SK-N-SH (cell line): ENCODE measurements at regions of chr5 and their contacts with region 1.

Region 1: GRCh38 chr5:115309751-115310370 is 13.4 kb upstream of the CCDC112 start:
- DNase-seq: no peak
- H3K4me3 ChIP-seq: no peak overlapping the region
- H3K27ac ChIP-seq: no peak overlapping the region
- H3K4me1 ChIP-seq: no peaks in the 10 kb centered on the region
- H3K27me3 ChIP-seq: no peaks in the 10 kb centered on the region
- CTCF ChIP-seq: peak; percentile 79
- EP300 ChIP-seq: no peak
- RAD21 ChIP-seq: peak; percentile 78

Region 2: GRCh38 chr5:115246361-115246991 is 63.4 kb before region 1 on chr5:
- CTCF ChIA-PET with region 1: no interaction called
- POLR2A ChIA-PET with region 1: no interaction called
- DNase-seq: peak; percentile 42
- H3K4me3 ChIP-seq: peak overlapping the region in 1 of 2 experiments; percentile 23; a peak in 1 of 4 replicates
- H3K27ac ChIP-seq: no peak overlapping the region; a peak in 1 of 4 replicates
- H3K4me1 ChIP-seq: peaks cover 0 to 3% of the 10 kb centered on the region in 2 experiments; a peak in 1 of 4 replicates
- H3K27me3 ChIP-seq: no peaks in the 10 kb centered on the region
- CTCF ChIP-seq: peak; percentile 87
- EP300 ChIP-seq: no peak
- RAD21 ChIP-seq: peak; percentile 89

Region 3: GRCh38 chr5:115325296-115325959 is 15.6 kb after region 1 on chr5:
- CTCF ChIA-PET with region 1: interaction called, 11 read pairs
- POLR2A ChIA-PET with region 1: no interaction called
- DNase-seq: no peak
- H3K4me3 ChIP-seq: no peak overlapping the region
- H3K27ac ChIP-seq: no peak overlapping the region
- H3K4me1 ChIP-seq: no peaks in the 10 kb centered on the region
- H3K27me3 ChIP-seq: no peaks in the 10 kb centered on the region
- CTCF ChIP-seq: no peak
- EP300 ChIP-seq: no peak
- RAD21 ChIP-seq: no peak

Region 4: GRCh38 chr5:115351356-115352195 is 41.7 kb after region 1 on chr5:
- CTCF ChIA-PET with region 1: no interaction called
- POLR2A ChIA-PET with region 1: no interaction called
- DNase-seq: no peak
- H3K4me3 ChIP-seq: no peak overlapping the region
- H3K27ac ChIP-seq: peak overlapping the region; percentile 41 to 67; a peak in 2 of 4 replicates
- H3K4me1 ChIP-seq: peaks cover 0 to 20% of the 10 kb centered on the region in 2 experiments
- H3K27me3 ChIP-seq: no peaks in the 10 kb centered on the region
- CTCF ChIP-seq: no peak
- EP300 ChIP-seq: 0 out of 4 replicates have a peak, but pooled peaks have one; percentile 18 to 19
- RAD21 ChIP-seq: no peak

Region 5: GRCh38 chr5:115402822-115403577 is 93.1 kb after region 1 on chr5:
- CTCF ChIA-PET with region 1: no interaction called
- POLR2A ChIA-PET with region 1: no interaction called
- DNase-seq: no peak
- H3K4me3 ChIP-seq: no peak overlapping the region
- H3K27ac ChIP-seq: peak overlapping the region in 1 of 2 experiments; percentile 78; a peak in 2 of 4 replicates
- H3K4me1 ChIP-seq: peaks cover 0 to 17% of the 10 kb centered on the region in 2 experiments; a peak in 3 of 4 replicates
- H3K27me3 ChIP-seq: no peaks in the 10 kb centered on the region
- CTCF ChIP-seq: no peak
- EP300 ChIP-seq: peak in 1 of 2 experiments; percentile 81; a peak in 2 of 4 replicates
- RAD21 ChIP-seq: no peak

Region 6: DNA sequence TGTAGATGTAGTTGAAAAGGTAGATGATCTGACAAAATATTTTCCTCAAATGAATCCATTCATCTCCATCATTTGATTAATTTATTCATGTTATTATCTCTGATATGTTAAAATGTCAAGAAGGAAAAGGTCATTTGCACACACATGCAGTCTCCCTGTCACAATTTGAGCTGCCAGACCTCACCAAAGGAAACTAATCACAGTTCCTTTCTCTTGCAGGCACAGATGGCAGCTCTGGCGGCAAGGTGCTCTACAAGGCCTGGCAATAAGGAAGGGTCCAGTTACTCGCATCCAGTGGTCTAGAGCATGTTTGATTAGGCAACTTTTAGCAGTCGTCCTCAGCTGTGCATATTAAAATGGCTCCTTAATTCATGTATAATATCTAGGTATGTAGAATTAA is 114.6 kb after region 1 on chr5:
- CTCF ChIA-PET with region 1: no interaction called
- POLR2A ChIA-PET with region 1: no interaction called
- DNase-seq: no peak
- H3K4me3 ChIP-seq: no peak overlapping the region
- H3K27ac ChIP-seq: no peak overlapping the region
- H3K4me1 ChIP-seq: peaks cover 0 to 6% of the 10 kb centered on the region in 2 experiments; a peak in 3 of 4 replicates
- H3K27me3 ChIP-seq: no peaks in the 10 kb centered on the region
- CTCF ChIP-seq: no peak
- EP300 ChIP-seq: no peak
- RAD21 ChIP-seq: no peak

Region 7: GRCh38 chr5:115579747-115580173 is 269.9 kb after region 1 on chr5:
- CTCF ChIA-PET with region 1: interaction called, 65 read pairs
- POLR2A ChIA-PET with region 1: no interaction called
- DNase-seq: no peak
- H3K4me3 ChIP-seq: no peak overlapping the region
- H3K27ac ChIP-seq: no peak overlapping the region
- H3K4me1 ChIP-seq: peaks cover 0 to 17% of the 10 kb centered on the region in 2 experiments; a peak in 1 of 4 replicates
- H3K27me3 ChIP-seq: no peaks in the 10 kb centered on the region
- CTCF ChIP-seq: no peak
- EP300 ChIP-seq: no peak
- RAD21 ChIP-seq: no peak

Region 8: GRCh38 chr5:115594128-115595047 is 284.5 kb after region 1 on chr5:
- CTCF ChIA-PET with region 1: interaction called, 40 read pairs
- POLR2A ChIA-PET with region 1: no interaction called
- DNase-seq: no peak
- H3K4me3 ChIP-seq: no peak overlapping the region
- H3K27ac ChIP-seq: no peak overlapping the region
- H3K4me1 ChIP-seq: peaks cover under 1 to 9% of the 10 kb centered on the region in 2 experiments; a peak in 2 of 4 replicates
- H3K27me3 ChIP-seq: no peaks in the 10 kb centered on the region
- CTCF ChIP-seq: no peak
- EP300 ChIP-seq: no peak
- RAD21 ChIP-seq: no peak